Astrocyte of the cerebellum (primary cell): ENCODE measurements at regions of chr9 and their contacts with region 1.

Region 1: DNA sequence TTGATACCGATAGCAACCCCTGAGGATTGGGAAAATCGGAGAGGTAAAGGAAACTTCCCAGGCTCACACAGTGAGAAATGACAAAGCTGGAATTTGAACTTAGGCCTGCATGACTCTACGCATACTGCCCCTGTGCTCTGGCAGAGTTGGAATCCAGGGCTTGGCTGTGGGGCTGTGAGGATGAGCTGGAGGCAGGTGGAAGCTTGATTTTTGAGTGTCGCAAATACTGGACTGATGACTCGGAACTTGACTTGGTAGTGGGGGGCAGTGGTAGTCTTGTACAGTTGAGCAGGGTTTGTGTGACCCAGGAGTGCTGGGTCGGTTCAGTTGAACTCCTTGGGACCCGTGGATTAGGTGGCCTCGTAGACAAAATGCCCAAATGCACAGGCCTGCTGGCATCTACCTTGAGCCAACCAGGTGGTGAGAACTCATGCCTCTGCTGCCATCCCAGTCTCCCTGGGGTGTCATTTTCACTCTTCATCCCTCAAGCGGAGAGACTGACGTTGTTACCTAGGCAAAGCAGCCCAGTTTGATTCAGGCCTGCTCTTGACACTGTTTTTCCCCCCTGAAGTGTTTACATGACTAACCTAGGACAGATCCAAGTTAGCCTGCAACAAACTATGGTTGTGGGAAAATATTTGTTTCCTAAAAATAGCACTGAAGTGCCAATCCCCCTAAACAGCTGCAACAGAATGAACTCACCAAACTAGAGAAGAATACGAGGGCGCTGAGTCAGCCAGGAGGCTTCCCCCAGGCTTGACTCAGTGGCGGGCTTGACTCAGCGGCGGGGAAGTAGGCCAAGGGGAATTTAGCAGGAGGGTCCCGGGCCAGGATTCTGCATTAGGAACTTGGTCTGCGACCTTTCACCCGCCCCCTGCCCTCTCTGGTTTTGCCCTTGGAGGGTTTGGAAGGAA is 45.7 kb upstream of the ORM1 start:
- DNase-seq: peak; percentile 92
- H3K4me3 ChIP-seq: no peak overlapping the region
- CTCF ChIP-seq: no peak

Region 2: GRCh38 chr9:114108016-114108833 is 168.9 kb before region 1 on chr9:
- in situ Hi-C with region 1: loop called (anchors 5 kb)
- DNase-seq: peak; percentile 55
- H3K4me3 ChIP-seq: no peak overlapping the region
- CTCF ChIP-seq: peak; percentile 98